ENCODE measurements at regions of chr1 and their contacts with region 1.

Region 1: GRCh38 chr1:201895913-201896807 is 7.5 kb downstream of the SHISA4 start:
- DNase-seq: peak; percentile 54 to 88 (median 72)
- ATAC-seq: peak; percentile 83 to 97 (median 88)
- H3K4me3 ChIP-seq: no peak overlapping the region
- H3K4me3 Mint-ChIP-seq: peak overlapping the region in 2 of 3 donors; percentile 23 to 32
- H3K27ac ChIP-seq: no peak overlapping the region
- H3K27ac Mint-ChIP-seq: peak overlapping the region; percentile 19 to 28
- H3K4me1 ChIP-seq: peaks cover 0 to 11% of the 10 kb centered on the region in 2 experiments
- H3K4me1 Mint-ChIP-seq: peaks cover 7% of the 10 kb centered on the region in 3 donors
- H3K27me3 ChIP-seq: peaks cover 0 to 37% of the 10 kb centered on the region in 2 experiments
- H3K27me3 Mint-ChIP-seq: peaks cover 26 to 37% of the 10 kb centered on the region in 2 donors

Region 2: GRCh38 chr1:201756406-201756805 is 139.8 kb before region 1 on chr1:
- CTCF ChIA-PET with region 1: no interaction called
- POLR2A ChIA-PET with region 1: no interaction called
- DNase-seq: no peak
- ATAC-seq: no peak
- H3K4me3 ChIP-seq: no peak overlapping the region
- H3K4me3 Mint-ChIP-seq: no peak overlapping the region
- H3K27ac ChIP-seq: no peak overlapping the region
- H3K27ac Mint-ChIP-seq: no peak overlapping the region
- H3K4me1 ChIP-seq: no peaks in the 10 kb centered on the region
- H3K4me1 Mint-ChIP-seq: peaks cover 8 to 12% (median 10%) of the 10 kb centered on the region in 3 donors
- H3K27me3 ChIP-seq: no peaks in the 10 kb centered on the region
- H3K27me3 Mint-ChIP-seq: peaks cover 6 to 13% of the 10 kb centered on the region in 2 donors

Region 3: DNA sequence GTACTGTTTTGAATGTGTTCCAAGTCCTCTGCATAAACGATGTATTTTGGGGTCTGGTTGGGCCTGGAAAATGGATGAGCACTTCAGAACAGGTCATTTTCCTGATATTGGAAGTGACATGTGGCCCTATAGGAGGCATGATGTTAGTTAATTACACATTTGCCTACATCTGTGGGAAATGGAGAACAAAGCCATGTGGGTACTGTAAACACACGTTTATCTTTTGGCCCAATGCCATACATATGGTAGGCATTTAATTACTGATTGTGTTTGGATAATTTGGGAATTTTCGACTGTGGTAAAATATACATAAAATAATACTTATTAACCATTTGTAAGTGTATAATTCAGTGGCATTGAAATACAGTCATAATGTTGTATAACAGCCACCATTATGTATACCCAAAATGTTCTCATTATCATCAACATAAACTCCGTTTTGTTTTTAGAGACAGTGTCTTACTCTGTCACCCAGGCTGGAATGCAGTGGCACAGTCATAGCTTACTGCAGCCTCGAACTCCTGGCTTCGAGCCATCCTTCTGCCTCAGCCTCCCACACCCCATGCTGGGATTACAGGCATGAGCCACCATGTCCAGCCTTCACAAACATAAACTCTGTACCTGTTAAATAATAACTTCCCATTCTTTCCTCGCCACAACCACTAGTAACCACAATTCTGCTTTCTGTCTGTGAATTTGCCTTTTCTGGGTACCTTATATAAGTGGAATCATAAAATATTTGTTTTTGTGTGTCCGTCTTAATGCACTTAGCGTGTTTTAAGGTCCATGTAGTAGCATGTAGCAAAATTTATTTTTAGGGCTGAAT is 74.4 kb after region 1 on chr1:
- CTCF ChIA-PET with region 1: interaction called, 15 to 32 read pairs
- POLR2A ChIA-PET with region 1: no interaction called
- DNase-seq: no peak
- ATAC-seq: no peak
- H3K4me3 ChIP-seq: no peak overlapping the region
- H3K4me3 Mint-ChIP-seq: no peak overlapping the region
- H3K27ac ChIP-seq: no peak overlapping the region
- H3K27ac Mint-ChIP-seq: no peak overlapping the region
- H3K4me1 ChIP-seq: no peaks in the 10 kb centered on the region
- H3K4me1 Mint-ChIP-seq: no peaks in the 10 kb centered on the region
- H3K27me3 ChIP-seq: no peaks in the 10 kb centered on the region
- H3K27me3 Mint-ChIP-seq: peaks cover 0 to 2% of the 10 kb centered on the region in 2 donors